ENCODE measurements at regions of chr16 and their contacts with region 1.

Region 1: GRCh38 chr16:86343027-86343787 is 167.1 kb upstream of the FOXF1 start:
- DNase-seq: no peak
- ATAC-seq: no peak
- H3K4me3 ChIP-seq: no peak overlapping the region
- H3K27ac ChIP-seq: no peak overlapping the region
- H3K4me1 ChIP-seq: peaks cover 13 to 32% of the 10 kb centered on the region in 2 experiments
- H3K27me3 ChIP-seq: no peaks in the 10 kb centered on the region
- CTCF ChIP-seq: no peak
- POLR2A ChIP-seq: no peak
- RAD21 ChIP-seq: no peak

Region 2: DNA sequence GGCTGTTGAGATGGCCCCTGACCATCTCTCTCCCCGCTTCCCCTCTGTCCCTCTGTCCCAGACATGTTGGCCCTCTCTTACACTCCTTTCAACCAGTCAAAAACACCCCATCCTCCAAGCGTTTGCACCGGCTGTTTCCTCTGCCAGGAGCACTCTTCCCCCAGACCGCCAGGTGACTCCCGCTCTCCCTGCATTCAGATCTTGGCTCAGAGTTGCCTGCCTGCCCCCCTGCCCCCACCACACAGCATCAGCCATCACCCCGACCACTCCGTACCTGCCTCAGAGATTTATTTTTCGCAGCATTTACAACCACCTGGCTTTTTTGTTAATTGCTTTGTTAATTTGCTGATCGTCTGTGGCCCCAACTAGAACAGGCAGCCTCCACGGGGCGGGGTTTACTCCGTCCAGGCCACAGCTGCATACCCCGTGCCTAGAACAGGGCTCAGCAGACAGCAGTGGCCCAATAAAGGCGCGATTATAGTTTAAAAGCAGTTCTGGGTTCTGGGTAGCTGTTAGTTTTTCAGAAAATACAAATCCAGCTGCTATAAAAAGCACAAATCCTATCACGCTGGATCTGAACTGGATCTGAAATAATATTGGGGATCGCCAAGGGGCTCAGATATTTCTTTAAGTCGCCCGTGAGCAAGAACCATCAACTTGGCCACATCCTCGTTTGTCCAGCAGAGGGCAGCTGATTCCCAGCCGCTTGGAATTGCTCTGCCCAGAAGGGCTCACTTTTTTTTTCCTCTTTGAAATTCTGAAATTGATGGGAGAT is 270.7 kb before region 1 on chr16:
- CTCF ChIA-PET with region 1: no interaction called
- POLR2A ChIA-PET with region 1: no interaction called
- RAD21 ChIA-PET with region 1: no interaction called
- intact Hi-C with region 1: loop called (anchors 5 kb)
- DNase-seq: peak; percentile 68
- ATAC-seq: peak; percentile 87
- H3K4me3 ChIP-seq: no peak overlapping the region; a peak in 1 of 4 replicates
- H3K27ac ChIP-seq: no peak overlapping the region
- H3K4me1 ChIP-seq: peaks cover 0 to 4% of the 10 kb centered on the region in 2 experiments; a peak in 1 of 4 replicates
- H3K27me3 ChIP-seq: no peaks in the 10 kb centered on the region
- CTCF ChIP-seq: peak; percentile 81 to 96 (median 88)
- POLR2A ChIP-seq: no peak
- RAD21 ChIP-seq: peak; percentile 92

Region 3: GRCh38 chr16:86355538-86355937 is 12.3 kb after region 1 on chr16:
- CTCF ChIA-PET with region 1: interaction called, 10 read pairs
- POLR2A ChIA-PET with region 1: interaction called, 5 read pairs
- RAD21 ChIA-PET with region 1: interaction called in 1 of 2 experiments, 5 read pairs
- intact Hi-C with region 1: no loop called
- DNase-seq: peak; percentile 92
- ATAC-seq: peak; percentile 77
- H3K4me3 ChIP-seq: peak overlapping the region in 1 of 2 experiments; percentile 37; a peak in 2 of 4 replicates
- H3K27ac ChIP-seq: peak overlapping the region; percentile 83
- H3K4me1 ChIP-seq: peaks cover 51 to 64% of the 10 kb centered on the region in 2 experiments
- H3K27me3 ChIP-seq: no peaks in the 10 kb centered on the region
- CTCF ChIP-seq: no peak
- POLR2A ChIP-seq: no peak
- RAD21 ChIP-seq: no peak; the same call in 1 of the 2 replicates

Region 4: GRCh38 chr16:86403541-86404163 is 60.4 kb after region 1 on chr16:
- CTCF ChIA-PET with region 1: no interaction called
- POLR2A ChIA-PET with region 1: no interaction called
- RAD21 ChIA-PET with region 1: interaction called in 1 of 2 experiments, 6 read pairs
- intact Hi-C with region 1: loop called (anchors 2 kb)
- DNase-seq: no peak
- ATAC-seq: peak; percentile 84
- H3K4me3 ChIP-seq: no peak overlapping the region
- H3K27ac ChIP-seq: no peak overlapping the region
- H3K4me1 ChIP-seq: peaks cover 0 to 11% of the 10 kb centered on the region in 2 experiments; a peak in 2 of 4 replicates
- H3K27me3 ChIP-seq: no peaks in the 10 kb centered on the region
- CTCF ChIP-seq: peak in 2 of 3 experiments; percentile 26 to 32; a peak in 3 of 6 replicates
- POLR2A ChIP-seq: no peak
- RAD21 ChIP-seq: peak; percentile 71